Activated T-helper 2 cell treated with anti-CD3 and anti-CD28 coated beads, Interferon-gamma antibody, Interleukin-2, Interleukin-4, amounts not matched to agents 10 μg/mL and 5 μg/mL and 100 μg/mL, durations not matched to agents 14 hours and 24 hours and 36 hours (primary cell): ENCODE measurements at regions of chr19 and their contacts with region 1.

Region 1: DNA sequence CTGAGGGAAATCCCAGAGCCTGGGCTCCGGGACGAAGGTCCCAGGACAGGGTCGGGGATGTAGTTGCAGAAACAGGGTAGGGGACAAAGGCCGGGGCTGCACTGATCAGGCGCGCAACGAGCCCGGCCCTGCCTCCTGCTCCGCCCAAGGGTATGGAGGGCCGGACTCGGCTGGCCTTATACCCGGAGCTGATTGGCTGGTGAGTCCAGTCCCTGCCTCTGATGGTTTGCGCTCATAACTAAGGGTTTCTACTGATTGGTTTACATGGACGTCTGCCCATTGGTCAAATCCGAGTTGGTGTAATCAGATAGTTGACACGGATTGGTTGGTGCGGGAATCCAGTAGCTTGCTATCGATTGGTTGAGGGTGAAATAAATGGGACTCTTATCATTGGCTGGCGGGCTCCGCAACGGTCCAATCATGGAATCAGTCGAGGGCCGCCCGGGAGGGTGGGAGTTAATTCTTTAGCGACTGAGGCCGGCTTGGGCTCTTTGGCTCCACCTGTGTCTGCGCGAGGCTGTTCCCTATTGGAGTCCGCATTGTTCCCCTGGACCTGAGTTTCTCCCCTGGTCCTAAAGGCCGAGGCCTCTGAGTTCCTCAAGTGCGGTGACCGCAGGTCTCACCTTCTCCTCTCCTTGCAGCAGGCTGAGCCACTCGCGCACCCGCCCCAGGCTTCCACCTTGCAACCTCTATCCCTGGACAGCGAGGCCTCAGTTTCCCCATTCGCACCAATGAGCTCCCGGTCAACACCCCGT is 570 bp upstream of the MPND start:
- DNase-seq: peak; percentile 95
- H3K4me3 Mint-ChIP-seq: peak overlapping the region; percentile 92
- H3K27ac Mint-ChIP-seq: peak overlapping the region; percentile 91
- H3K4me1 Mint-ChIP-seq: peaks cover 15% of the 10 kb centered on the region
- H3K27me3 Mint-ChIP-seq: no peaks in the 10 kb centered on the region

Region 2: GRCh38 chr19:4328243-4328990 is 14.4 kb before region 1 on chr19:
- intact Hi-C with region 1: loop called (anchors 1 kb)
- DNase-seq: peak; percentile 85
- H3K4me3 Mint-ChIP-seq: peak overlapping the region; percentile 83
- H3K27ac Mint-ChIP-seq: peak overlapping the region; percentile 76
- H3K4me1 Mint-ChIP-seq: peaks cover 17% of the 10 kb centered on the region
- H3K27me3 Mint-ChIP-seq: peaks cover 3% of the 10 kb centered on the region

Region 3: GRCh38 chr19:4369888-4370260 is 27.1 kb after region 1 on chr19:
- intact Hi-C with region 1: loop called (anchors 2 kb)
- DNase-seq: peak; percentile 69
- H3K4me3 Mint-ChIP-seq: peak overlapping the region; percentile 66
- H3K27ac Mint-ChIP-seq: peak overlapping the region; percentile 82
- H3K4me1 Mint-ChIP-seq: peaks cover 34% of the 10 kb centered on the region
- H3K27me3 Mint-ChIP-seq: no peaks in the 10 kb centered on the region

Region 4: GRCh38 chr19:4390567-4391305 is 47.9 kb after region 1 on chr19:
- intact Hi-C with region 1: no loop called
- DNase-seq: no peak
- H3K4me3 Mint-ChIP-seq: no peak overlapping the region
- H3K27ac Mint-ChIP-seq: peak overlapping the region; percentile 50
- H3K4me1 Mint-ChIP-seq: peaks cover 30% of the 10 kb centered on the region
- H3K27me3 Mint-ChIP-seq: no peaks in the 10 kb centered on the region